ENCODE measurements at regions of chr17 and their contacts with region 1.

Region 1: DNA sequence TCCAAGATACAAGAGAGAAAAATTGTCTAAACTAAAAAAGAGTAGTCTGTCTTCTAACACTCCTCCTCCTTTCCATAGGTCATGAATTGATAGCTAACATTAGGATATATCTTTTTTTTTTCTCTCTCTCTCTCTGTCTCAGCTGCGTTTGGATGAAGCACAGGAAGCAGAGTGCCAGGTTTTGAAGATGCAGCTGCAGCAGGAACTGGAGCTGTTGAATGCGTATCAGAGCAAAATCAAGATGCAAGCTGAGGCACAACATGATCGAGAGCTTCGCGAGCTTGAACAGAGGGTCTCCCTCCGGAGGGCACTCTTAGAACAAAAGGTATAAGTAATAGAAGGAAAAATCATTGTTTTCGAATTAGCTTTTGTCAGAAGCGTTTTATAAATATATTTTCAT is 32.9 kb downstream of the ABHD15 start:
- DNase-seq: no peak
- H3K4me3 ChIP-seq: no peak overlapping the region
- H3K27ac ChIP-seq: no peak overlapping the region
- H3K4me1 ChIP-seq: no peaks in the 10 kb centered on the region
- H3K27me3 ChIP-seq: no peaks in the 10 kb centered on the region
- CTCF ChIP-seq: no peak
- EP300 ChIP-seq: no peak
- POLR2A ChIP-seq: no peak
- RAD21 ChIP-seq: no peak

Region 2: GRCh38 chr17:29504711-29505110 is 29.3 kb before region 1 on chr17:
- CTCF ChIA-PET with region 1: interaction called, 21 read pairs
- POLR2A ChIA-PET with region 1: no interaction called
- DNase-seq: no peak
- H3K4me3 ChIP-seq: no peak overlapping the region
- H3K27ac ChIP-seq: no peak overlapping the region
- H3K4me1 ChIP-seq: no peaks in the 10 kb centered on the region
- H3K27me3 ChIP-seq: no peaks in the 10 kb centered on the region
- CTCF ChIP-seq: no peak
- EP300 ChIP-seq: no peak
- POLR2A ChIP-seq: no peak
- RAD21 ChIP-seq: no peak

Region 3: DNA sequence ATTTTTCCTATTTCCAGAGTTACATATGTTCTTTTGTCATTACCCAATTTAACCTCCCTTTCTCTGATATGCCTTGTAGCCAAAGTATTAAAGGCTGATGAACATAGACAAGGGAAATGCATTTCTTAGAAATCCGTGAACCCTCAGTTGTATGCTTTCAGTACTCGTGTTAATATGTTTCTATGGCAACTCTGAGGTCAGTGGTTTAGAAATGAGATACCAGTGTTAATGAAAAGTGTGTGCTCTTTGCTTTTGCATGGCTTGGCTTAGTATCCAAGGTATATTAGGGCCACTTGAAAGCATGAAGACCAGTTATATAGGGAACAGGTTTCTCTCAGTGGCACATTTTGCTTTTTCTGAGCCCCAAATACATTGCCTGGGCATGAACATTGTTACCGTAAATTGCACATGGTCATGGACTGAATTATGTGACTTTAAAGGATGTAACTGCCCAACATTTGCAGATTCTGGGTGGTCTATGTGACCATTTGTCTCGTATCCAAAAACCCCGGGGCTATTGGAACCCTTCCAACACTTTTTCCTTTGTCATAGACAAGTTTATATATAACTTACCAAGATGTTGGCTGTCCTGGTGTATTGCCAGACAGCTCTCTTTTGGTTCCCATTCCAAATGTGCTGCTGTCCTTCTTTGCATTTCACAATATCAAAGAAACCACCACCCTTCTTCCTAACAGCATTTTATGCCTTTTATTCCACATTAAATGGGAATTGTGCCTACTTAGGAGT is 15.4 kb after region 1 on chr17:
- CTCF ChIA-PET with region 1: interaction called, 13 read pairs
- POLR2A ChIA-PET with region 1: interaction called, 3 read pairs
- DNase-seq: no peak
- H3K4me3 ChIP-seq: no peak overlapping the region
- H3K27ac ChIP-seq: no peak overlapping the region
- H3K4me1 ChIP-seq: no peaks in the 10 kb centered on the region
- H3K27me3 ChIP-seq: no peaks in the 10 kb centered on the region
- CTCF ChIP-seq: no peak
- EP300 ChIP-seq: no peak
- POLR2A ChIP-seq: no peak
- RAD21 ChIP-seq: no peak

Region 4: DNA sequence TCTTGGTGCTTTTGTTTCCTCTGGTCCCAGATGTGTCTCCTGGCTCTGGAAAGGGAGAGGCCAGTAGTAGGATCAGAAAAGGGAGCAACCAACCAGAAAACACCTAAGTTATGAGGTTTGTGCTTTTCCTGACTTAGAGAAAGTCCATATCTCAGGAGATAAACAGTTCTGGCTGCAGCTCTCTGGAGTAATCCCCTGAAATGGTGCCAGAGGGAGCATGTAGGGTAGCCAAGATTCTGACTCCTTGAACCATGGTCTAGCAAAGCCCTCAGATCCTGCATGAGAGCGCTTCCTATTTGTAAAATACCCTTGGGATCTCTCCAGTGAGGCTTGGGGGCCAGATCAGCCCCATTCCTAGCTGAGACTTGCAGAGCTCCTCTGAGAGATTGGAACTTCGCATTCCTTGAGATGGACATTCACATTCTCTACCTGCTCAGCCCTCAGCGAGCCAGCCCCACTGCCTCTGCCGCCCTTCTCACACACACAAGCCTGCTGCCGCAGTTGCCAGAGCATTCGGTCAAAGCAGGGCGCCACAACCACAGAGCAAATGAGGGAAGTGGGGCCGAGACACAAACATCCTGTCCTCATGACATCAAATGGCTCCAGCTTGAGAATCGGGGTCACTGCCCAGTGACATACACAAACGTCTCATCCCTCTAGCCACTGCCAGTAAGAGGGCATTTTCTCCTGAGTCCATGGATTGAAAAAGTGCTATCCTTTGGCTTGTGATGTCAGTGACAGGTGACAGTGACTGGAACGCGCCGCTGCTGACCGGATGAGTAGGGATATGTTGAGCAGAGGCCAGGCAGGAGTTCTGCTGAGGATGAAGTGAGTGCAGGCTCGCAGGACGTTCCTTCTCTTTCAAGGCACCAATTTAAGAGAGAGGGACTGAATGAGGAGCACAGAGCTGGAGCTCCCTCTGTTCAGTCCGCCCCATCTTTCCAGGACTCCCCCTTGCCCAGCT is 27.9 kb after region 1 on chr17:
- CTCF ChIA-PET with region 1: interaction called, 15 read pairs
- POLR2A ChIA-PET with region 1: no interaction called
- DNase-seq: no peak
- H3K4me3 ChIP-seq: no peak overlapping the region
- H3K27ac ChIP-seq: no peak overlapping the region
- H3K4me1 ChIP-seq: peaks cover 0 to 7% (median 6%) of the 10 kb centered on the region in 4 experiments; a peak in 4 of 7 replicates
- H3K27me3 ChIP-seq: peaks cover 11 to 28% (median 23%) of the 10 kb centered on the region in 4 experiments
- CTCF ChIP-seq: no peak
- EP300 ChIP-seq: no peak
- POLR2A ChIP-seq: no peak
- RAD21 ChIP-seq: no peak

Region 5: GRCh38 chr17:29568331-29569244 is 34.6 kb after region 1 on chr17 and contains the start of gene TP53I13:
- CTCF ChIA-PET with region 1: interaction called, 10 read pairs
- POLR2A ChIA-PET with region 1: no interaction called
- DNase-seq: peak in 1 of 2 experiments; percentile 87
- H3K4me3 ChIP-seq: peak within 1 kb of the TSS; percentile 66 to 76 (median 72)
- H3K27ac ChIP-seq: no peak within 1 kb of the TSS
- H3K4me1 ChIP-seq: peaks cover 6 to 15% (median 11%) of the 10 kb centered on the region in 4 experiments; a peak in 6 of 7 replicates
- H3K27me3 ChIP-seq: peaks cover 11 to 48% (median 34%) of the 10 kb centered on the region in 4 experiments
- CTCF ChIP-seq: no peak
- EP300 ChIP-seq: no peak
- POLR2A ChIP-seq: no peak
- RAD21 ChIP-seq: no peak
- total RNA-seq, gene TP53I13: 21.1 and 22.4 TPM in 2 replicates